ENCODE measurements at regions of chr13 and their contacts with region 1.

Region 1: DNA sequence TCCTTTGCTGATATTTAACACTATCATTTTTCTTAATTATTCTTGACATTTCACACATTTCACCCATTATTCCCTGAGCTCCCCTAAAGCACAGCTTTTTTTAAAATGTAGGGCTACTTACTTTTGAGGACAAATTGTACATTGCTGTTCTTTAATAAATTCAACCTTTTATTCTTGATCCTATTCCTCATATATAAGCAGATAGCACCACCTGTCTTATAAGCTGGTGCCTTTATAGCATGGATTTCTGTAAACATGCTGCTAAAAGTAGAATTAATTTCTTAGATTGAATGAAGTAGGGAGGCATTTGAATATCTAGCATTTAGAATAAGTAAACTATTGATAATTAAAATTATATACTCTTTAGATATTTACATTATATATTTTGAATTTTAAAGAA is 603.4 kb upstream of the PCDH9 start:
- DNase-seq: no peak
- ATAC-seq: no peak
- H3K4me3 ChIP-seq: no peak overlapping the region
- H3K4me3 Mint-ChIP-seq: no peak overlapping the region
- H3K27ac ChIP-seq: no peak overlapping the region
- H3K27ac Mint-ChIP-seq: no peak overlapping the region
- H3K4me1 ChIP-seq: no peaks in the 10 kb centered on the region
- H3K4me1 Mint-ChIP-seq: no peaks in the 10 kb centered on the region
- H3K27me3 ChIP-seq: no peaks in the 10 kb centered on the region
- H3K27me3 Mint-ChIP-seq: no peaks in the 10 kb centered on the region
- CTCF ChIP-seq: no peak

Region 2: GRCh38 chr13:67186995-67187569 is 646.5 kb before region 1 on chr13:
- CTCF ChIA-PET with region 1: no interaction called
- POLR2A ChIA-PET with region 1: no interaction called
- intact Hi-C with region 1: loop called in 1 of 2 experiments (anchors 5 kb)
- DNase-seq: no peak
- ATAC-seq: no peak
- H3K4me3 ChIP-seq: no peak overlapping the region
- H3K4me3 Mint-ChIP-seq: no peak overlapping the region
- H3K27ac ChIP-seq: no peak overlapping the region
- H3K27ac Mint-ChIP-seq: no peak overlapping the region
- H3K4me1 ChIP-seq: no peaks in the 10 kb centered on the region
- H3K4me1 Mint-ChIP-seq: no peaks in the 10 kb centered on the region
- H3K27me3 ChIP-seq: no peaks in the 10 kb centered on the region
- H3K27me3 Mint-ChIP-seq: no peaks in the 10 kb centered on the region
- CTCF ChIP-seq: no peak